Activated CD4-positive, alpha-beta T cell treated with anti-CD3 and anti-CD28 coated beads, Interleukin-2, amount 10 ng/mL, durations not matched to agents 24 days and 14 days (primary cell): ENCODE measurements at regions of chr4 and their contacts with region 1.

Region 1: GRCh38 chr4:142567199-142567598 is 278.9 kb downstream of the INPP4B start:
- DNase-seq: peak; percentile 89
- H3K4me3 Mint-ChIP-seq: peak overlapping the region; percentile 85
- H3K27ac Mint-ChIP-seq: peak overlapping the region; percentile 93
- H3K4me1 Mint-ChIP-seq: peaks cover 43% of the 10 kb centered on the region
- H3K27me3 Mint-ChIP-seq: no peaks in the 10 kb centered on the region

Region 2: DNA sequence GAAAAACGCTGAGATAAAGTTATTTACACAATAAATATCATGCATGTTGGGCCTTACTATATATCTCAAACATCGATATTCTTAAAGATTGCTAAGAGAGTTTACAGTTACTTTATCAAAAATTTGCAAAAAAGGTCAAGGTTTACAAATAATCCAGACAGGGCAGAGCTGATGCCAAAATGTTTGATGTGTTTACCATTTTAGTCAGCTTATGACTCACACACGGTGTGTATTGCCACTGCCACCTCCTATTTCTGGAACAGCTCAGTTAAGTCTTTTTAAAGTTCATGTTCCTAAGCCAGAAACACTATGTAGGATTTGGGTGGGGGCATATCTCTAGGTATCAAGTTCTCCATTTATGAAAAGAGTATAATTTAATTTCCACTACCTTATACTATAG is 301.7 kb before region 1 on chr4:
- intact Hi-C with region 1: loop called (anchors 5 kb)
- DNase-seq: peak; percentile 58
- H3K4me3 Mint-ChIP-seq: peak overlapping the region; percentile 6
- H3K27ac Mint-ChIP-seq: peak overlapping the region; percentile 65
- H3K4me1 Mint-ChIP-seq: peaks cover 46% of the 10 kb centered on the region
- H3K27me3 Mint-ChIP-seq: no peaks in the 10 kb centered on the region

Region 3: GRCh38 chr4:142379277-142380057 is 187.7 kb before region 1 on chr4:
- intact Hi-C with region 1: loop called (anchors 1 kb)
- DNase-seq: no peak
- H3K4me3 Mint-ChIP-seq: no peak overlapping the region
- H3K27ac Mint-ChIP-seq: peak overlapping the region; percentile 77
- H3K4me1 Mint-ChIP-seq: peaks cover 51% of the 10 kb centered on the region
- H3K27me3 Mint-ChIP-seq: no peaks in the 10 kb centered on the region

Region 4: DNA sequence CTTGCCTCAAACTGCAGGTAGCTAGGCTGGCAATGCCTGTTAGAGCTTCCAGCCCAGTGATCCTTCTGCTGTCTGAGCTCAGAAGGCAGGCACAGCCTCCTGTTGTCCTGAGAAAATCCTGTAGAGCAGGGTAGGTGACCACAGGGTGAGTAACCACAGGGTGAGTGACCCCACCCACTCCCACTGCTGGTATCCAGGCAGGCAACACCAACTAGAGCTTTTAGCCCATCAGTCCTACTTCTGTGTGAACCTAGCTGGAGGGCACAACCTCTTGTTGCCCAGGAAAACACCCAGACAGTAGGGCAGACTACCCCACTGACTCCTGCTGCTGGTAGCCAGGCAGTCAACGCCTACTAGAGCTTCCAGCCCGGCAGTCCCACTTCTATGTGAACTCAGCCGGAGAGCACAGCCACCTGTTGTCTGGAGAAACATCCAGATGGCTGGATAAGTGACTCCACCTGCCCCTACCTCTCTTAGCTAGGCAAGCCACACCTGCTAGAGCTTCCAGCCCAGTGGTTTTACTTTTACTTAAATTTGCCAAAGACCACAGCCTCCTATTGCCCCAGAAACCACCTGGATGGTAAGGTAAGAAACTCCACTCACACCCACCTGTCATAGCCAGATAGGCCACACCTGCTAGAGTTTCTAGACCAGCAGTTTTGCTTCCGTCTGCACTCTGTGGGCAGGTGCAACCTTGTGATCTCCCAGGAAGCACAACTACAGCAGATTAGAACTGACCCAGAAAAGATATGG is 92.7 kb before region 1 on chr4:
- intact Hi-C with region 1: no loop called
- DNase-seq: no peak
- H3K4me3 Mint-ChIP-seq: no peak overlapping the region
- H3K27ac Mint-ChIP-seq: no peak overlapping the region
- H3K4me1 Mint-ChIP-seq: peaks cover 13% of the 10 kb centered on the region
- H3K27me3 Mint-ChIP-seq: no peaks in the 10 kb centered on the region

Region 5: DNA sequence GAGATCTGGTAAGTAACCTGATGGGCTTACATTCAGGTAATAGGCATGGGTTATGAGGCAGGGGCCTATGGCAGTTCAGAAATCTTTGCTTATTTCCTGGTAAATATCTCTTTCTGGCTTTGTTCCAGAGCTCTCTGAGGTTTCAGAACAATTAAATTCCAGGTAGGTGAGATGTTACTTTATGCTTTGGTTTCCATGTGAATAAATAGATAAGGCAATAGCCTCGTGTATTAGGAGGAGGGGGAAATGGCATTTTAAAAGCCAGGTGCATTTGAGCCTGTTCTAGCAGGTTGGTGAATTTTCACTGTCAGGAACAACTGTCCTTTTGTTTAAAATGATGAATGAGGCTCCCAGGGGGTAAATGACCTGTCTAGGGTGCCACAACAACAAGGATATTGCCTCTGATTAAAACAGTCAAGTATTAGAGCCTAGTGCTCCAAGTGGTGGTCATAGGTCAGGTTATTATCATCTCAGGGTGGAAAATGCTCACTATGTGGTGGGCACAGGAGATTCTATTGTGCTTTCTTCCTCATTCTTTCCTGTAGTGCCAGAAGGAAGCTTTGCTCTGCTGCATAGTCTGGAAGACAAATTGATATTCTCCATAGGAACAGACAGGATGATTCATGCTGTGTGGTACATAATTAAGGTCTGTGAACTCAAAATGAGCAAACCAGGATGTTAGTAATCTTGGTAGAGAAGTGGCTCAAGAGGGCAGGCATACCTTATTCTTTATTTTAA is 17.3 kb before region 1 on chr4:
- intact Hi-C with region 1: loop called (anchors 1 kb)
- DNase-seq: no peak
- H3K4me3 Mint-ChIP-seq: no peak overlapping the region
- H3K27ac Mint-ChIP-seq: peak overlapping the region; percentile 57
- H3K4me1 Mint-ChIP-seq: peaks cover 44% of the 10 kb centered on the region
- H3K27me3 Mint-ChIP-seq: no peaks in the 10 kb centered on the region

Region 6: DNA sequence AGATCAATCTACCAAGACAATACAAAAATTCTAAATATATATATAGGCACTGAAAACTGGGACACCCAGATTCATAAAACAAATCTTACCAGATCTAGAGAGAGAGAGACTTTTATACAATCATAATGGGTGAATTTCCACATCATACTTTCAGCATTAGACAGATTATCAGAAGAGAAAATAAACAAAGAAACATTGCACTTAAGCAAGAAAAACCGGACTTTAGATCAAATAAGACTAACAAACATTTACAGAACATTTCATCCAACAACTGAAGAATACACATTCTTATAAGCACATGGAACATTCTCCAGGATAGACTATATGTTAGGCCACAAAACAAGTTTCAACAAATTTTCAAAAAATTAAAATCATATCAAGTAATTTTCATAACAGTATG is 33.8 kb after region 1 on chr4:
- intact Hi-C with region 1: no loop called
- DNase-seq: no peak
- H3K4me3 Mint-ChIP-seq: no peak overlapping the region
- H3K27ac Mint-ChIP-seq: no peak overlapping the region
- H3K4me1 Mint-ChIP-seq: peaks cover 5% of the 10 kb centered on the region
- H3K27me3 Mint-ChIP-seq: no peaks in the 10 kb centered on the region

Region 7: DNA sequence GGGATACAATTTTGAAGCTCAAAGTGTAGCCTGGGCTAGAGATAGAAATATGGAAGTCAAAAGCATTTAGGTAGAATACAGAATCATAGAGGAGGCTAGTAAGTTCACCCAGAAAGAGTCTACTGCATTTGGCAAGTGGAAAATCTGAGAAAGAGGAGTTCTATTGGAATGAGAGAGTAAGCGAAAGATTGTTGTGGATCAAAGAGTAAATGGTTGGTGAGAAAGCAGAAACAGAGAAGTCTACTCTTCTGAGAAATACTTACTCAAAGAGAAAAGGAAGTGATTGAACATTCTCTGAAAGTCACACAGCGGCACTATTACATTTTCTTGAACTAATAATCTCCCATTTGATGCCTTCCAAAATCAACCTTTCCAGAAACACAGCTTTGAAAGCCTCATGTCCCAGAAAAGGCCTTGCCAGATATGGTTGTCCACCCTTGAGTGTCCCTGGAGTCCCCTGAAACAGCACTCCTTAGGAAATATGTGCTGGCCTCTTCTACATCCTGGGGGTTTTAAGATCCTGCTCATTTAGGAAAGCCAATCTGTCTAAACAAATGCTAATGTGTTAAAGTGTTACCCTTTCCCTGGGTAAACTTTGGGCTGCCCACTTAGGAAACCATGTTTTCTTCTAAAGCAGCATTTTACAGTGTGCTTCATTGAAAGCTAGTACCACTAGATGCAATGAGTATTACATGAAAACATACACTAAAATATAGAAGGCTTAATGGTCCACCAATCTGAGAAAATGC is 146.3 kb after region 1 on chr4:
- intact Hi-C with region 1: loop called (anchors 5 kb)
- DNase-seq: no peak
- H3K4me3 Mint-ChIP-seq: peak overlapping the region; percentile 44
- H3K27ac Mint-ChIP-seq: peak overlapping the region; percentile 57
- H3K4me1 Mint-ChIP-seq: peaks cover 41% of the 10 kb centered on the region
- H3K27me3 Mint-ChIP-seq: no peaks in the 10 kb centered on the region

Region 8: GRCh38 chr4:142846729-142847596 is 279.8 kb after region 1 on chr4:
- intact Hi-C with region 1: loop called (anchors 2 kb)
- DNase-seq: peak; percentile 92
- H3K4me3 Mint-ChIP-seq: peak overlapping the region; percentile 95
- H3K27ac Mint-ChIP-seq: peak overlapping the region; percentile 89
- H3K4me1 Mint-ChIP-seq: peaks cover 18% of the 10 kb centered on the region
- H3K27me3 Mint-ChIP-seq: peaks cover 22% of the 10 kb centered on the region